Activated naive CD4-positive, alpha-beta T cell treated with anti-CD3 and anti-CD28 coated beads for 36 hours (primary cell): ENCODE measurements at regions of chr14 and their contacts with region 1.

Region 1: GRCh38 chr14:105666420-105666819 is 140.0 kb downstream of the TMEM121 start:
- DNase-seq: no peak
- H3K4me3 Mint-ChIP-seq: no peak overlapping the region
- H3K27ac Mint-ChIP-seq: no peak overlapping the region
- H3K4me1 Mint-ChIP-seq: no peaks in the 10 kb centered on the region
- H3K27me3 Mint-ChIP-seq: no peaks in the 10 kb centered on the region

Region 2: DNA sequence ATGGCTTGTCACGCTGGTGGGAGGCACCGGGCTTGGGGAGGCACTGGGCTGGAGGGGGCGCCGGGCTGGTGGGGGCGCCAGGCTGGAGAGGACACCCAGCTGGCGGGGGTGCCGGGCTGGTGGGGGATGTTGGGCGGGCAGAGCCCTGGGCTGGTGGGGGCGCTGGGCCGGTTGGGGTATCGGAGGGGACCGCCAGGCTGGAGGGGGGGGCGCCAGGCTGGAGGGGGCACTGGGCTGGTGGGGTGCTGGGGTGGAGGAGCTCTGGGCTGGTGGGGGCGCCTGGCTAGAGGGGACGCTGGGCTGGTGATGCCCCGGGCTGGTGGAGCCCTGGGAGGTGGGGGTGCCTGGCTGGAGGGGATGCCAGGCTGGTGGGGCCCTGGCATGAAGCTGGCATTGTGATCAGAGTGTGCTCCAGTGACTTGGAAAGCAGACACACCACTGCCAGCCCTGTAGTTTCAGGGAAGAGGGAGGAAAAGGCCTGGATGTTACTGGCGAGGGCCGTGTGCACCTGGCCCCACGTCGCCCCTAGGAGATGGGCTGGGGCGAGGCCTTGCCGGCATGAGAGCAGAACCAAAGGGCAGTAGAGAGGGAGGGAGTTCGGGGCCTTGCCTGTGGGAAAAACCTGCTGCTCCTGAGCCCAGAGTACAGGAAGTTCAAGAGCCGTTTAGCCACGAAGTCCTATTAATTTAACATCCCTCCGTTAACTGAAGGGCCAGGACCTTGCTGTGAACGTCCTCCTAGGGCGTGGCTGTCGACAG is 162.3 kb before region 1 on chr14:
- CTCF ChIA-PET with region 1: no interaction called
- intact Hi-C with region 1: no loop called
- DNase-seq: no peak
- H3K4me3 Mint-ChIP-seq: no peak overlapping the region
- H3K27ac Mint-ChIP-seq: no peak overlapping the region
- H3K4me1 Mint-ChIP-seq: no peaks in the 10 kb centered on the region
- H3K27me3 Mint-ChIP-seq: peaks cover 13% of the 10 kb centered on the region

Region 3: DNA sequence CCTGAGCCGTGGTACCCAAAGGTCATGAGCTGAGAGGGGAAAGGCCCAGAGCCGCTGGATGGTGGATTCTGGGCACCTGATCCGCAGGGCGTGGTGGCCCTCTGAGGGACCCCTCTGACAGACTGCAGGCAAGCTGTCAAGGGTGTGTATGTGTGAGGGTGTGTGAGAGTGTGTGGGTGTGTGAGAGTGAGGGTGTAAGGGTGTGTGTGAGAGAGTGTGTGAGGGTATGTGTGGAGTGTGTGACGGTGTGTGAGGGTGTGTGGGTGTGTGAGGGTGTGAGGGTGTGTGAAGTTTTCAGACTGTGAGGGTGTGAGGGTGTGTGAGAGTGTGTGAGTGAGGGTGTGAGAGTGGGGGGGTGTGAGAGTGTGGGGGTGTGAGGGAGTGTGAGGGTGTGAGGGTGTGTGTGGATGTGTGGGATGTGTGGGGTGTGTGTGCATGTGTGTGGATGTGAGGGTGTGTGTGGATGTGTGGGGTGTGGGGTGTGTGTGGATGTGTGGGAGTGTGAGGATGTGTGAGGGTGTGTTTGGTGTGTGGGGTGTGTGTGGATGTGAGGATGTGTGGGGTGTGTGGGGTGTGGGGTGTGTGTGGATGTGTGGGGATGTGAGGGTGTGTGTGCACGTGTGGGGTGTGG is 16.6 kb after region 1 on chr14:
- CTCF ChIA-PET with region 1: no interaction called
- intact Hi-C with region 1: no loop called
- DNase-seq: no peak
- H3K4me3 Mint-ChIP-seq: no peak overlapping the region
- H3K27ac Mint-ChIP-seq: no peak overlapping the region
- H3K4me1 Mint-ChIP-seq: no peaks in the 10 kb centered on the region
- H3K27me3 Mint-ChIP-seq: no peaks in the 10 kb centered on the region

Region 4: DNA sequence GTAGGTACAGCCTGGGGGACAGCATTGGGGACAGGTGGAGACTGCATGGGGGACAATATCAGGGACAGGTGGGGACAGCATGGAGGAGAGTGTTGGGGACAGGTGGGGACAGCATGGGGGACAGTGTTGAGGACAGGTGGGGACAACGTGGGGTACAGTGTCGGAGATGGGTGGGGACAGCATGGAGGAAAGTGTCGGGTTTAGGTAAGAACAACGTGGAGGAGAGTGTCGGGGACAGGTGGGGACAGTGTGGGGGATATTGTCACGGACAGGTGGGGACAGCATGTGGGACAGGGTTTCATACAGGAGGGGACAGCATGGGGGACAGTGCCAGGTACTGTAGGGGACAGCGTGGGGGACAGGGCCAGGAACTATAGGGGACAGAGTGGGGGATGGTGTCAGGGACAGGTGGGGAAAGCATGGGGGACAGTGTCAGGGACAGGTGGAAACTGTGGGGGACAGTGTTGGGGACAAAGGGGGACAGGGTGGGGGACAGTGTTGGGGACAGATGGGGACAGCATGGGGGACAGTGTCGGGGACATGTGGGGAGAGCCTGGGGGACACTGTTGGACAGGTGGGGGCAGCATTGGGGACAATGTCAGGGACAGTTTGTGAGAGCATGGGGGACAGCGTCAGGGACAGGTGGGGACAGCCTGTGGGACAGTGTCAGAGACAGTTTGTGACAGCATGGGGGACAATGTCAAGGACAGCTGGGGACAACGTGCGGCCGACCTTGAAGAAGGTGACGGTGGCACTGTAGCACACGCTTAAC is 73.1 kb after region 1 on chr14:
- CTCF ChIA-PET with region 1: no interaction called
- intact Hi-C with region 1: loop called (anchors 5 kb)
- DNase-seq: no peak
- H3K4me3 Mint-ChIP-seq: no peak overlapping the region
- H3K27ac Mint-ChIP-seq: no peak overlapping the region
- H3K4me1 Mint-ChIP-seq: no peaks in the 10 kb centered on the region
- H3K27me3 Mint-ChIP-seq: no peaks in the 10 kb centered on the region

Region 5: GRCh38 chr14:106062502-106063272 is 396.3 kb after region 1 on chr14:
- CTCF ChIA-PET with region 1: no interaction called
- intact Hi-C with region 1: loop called (anchors 10 kb)
- DNase-seq: no peak
- H3K4me3 Mint-ChIP-seq: no peak overlapping the region
- H3K27ac Mint-ChIP-seq: no peak overlapping the region
- H3K4me1 Mint-ChIP-seq: peaks cover 15% of the 10 kb centered on the region
- H3K27me3 Mint-ChIP-seq: peaks cover 9% of the 10 kb centered on the region

Region 6: DNA sequence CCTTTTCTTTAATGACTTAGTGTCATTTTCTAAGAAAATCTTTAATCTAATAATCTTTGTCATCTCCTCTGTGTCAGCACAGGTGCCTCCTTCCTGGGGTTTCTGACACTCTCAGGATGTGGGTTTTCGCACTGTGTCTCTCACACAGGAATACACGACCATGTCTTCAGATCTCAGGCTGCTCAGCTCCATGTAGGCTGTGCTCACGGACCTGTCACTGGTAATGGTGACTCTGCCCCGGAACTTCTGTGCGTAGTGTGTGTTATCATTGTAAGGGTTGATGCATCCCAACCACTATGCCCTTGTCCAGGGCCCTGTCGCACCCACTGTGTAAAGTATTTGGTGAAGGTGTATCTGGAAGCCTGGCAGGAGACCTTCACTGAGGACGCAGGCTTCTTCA is 507.8 kb after region 1 on chr14:
- CTCF ChIA-PET with region 1: no interaction called
- intact Hi-C with region 1: no loop called
- DNase-seq: peak; percentile 78
- H3K4me3 Mint-ChIP-seq: peak overlapping the region; percentile 25
- H3K27ac Mint-ChIP-seq: no peak overlapping the region
- H3K4me1 Mint-ChIP-seq: peaks cover 54% of the 10 kb centered on the region
- H3K27me3 Mint-ChIP-seq: no peaks in the 10 kb centered on the region